ENCODE measurements at regions of chr20 and their contacts with region 1.

Region 1: DNA sequence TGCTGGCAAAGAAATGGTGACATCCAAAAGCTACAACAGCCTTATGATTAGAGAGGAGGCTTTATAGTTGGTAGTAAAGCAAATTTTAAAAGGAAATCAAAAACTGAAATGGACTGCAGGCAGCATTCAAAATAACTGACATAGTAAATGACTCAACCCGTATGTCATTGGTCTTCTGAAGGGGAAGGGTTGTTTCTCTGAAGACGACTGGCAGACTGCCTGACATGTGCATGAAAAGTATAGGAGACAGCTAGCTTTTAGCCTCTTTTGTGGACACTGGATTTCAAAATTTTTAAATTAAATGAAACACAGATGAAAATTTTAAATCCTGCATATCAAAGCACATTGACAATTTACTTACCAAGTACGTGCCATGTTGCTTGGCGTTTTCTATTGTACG is 90.7 kb downstream of the TRMT6 start:
- DNase-seq: no peak
- ATAC-seq: no peak
- H3K4me3 ChIP-seq: no peak overlapping the region
- H3K4me3 Mint-ChIP-seq: no peak overlapping the region
- H3K27ac ChIP-seq: no peak overlapping the region
- H3K27ac Mint-ChIP-seq: no peak overlapping the region
- H3K4me1 ChIP-seq: peaks cover 15% of the 10 kb centered on the region
- H3K4me1 Mint-ChIP-seq: peaks cover 11% of the 10 kb centered on the region
- H3K27me3 ChIP-seq: no peaks in the 10 kb centered on the region
- H3K27me3 Mint-ChIP-seq: no peaks in the 10 kb centered on the region
- CTCF ChIP-seq: no peak

Region 2: GRCh38 chr20:5877128-5877527 is 17.5 kb after region 1 on chr20:
- CTCF ChIA-PET with region 1: no interaction called
- POLR2A ChIA-PET with region 1: no interaction called
- intact Hi-C with region 1: no loop called
- DNase-seq: no peak
- ATAC-seq: no peak
- H3K4me3 ChIP-seq: no peak overlapping the region
- H3K4me3 Mint-ChIP-seq: no peak overlapping the region
- H3K27ac ChIP-seq: no peak overlapping the region
- H3K27ac Mint-ChIP-seq: no peak overlapping the region
- H3K4me1 ChIP-seq: no peaks in the 10 kb centered on the region
- H3K4me1 Mint-ChIP-seq: peaks cover 5% of the 10 kb centered on the region
- H3K27me3 ChIP-seq: no peaks in the 10 kb centered on the region
- H3K27me3 Mint-ChIP-seq: no peaks in the 10 kb centered on the region
- CTCF ChIP-seq: no peak

Region 3: GRCh38 chr20:5900908-5901307 is 41.3 kb after region 1 on chr20:
- CTCF ChIA-PET with region 1: no interaction called
- POLR2A ChIA-PET with region 1: no interaction called
- intact Hi-C with region 1: loop called in 1 of 2 experiments (anchors 5 kb)
- DNase-seq: no peak
- ATAC-seq: no peak
- H3K4me3 ChIP-seq: no peak overlapping the region
- H3K4me3 Mint-ChIP-seq: no peak overlapping the region
- H3K27ac ChIP-seq: no peak overlapping the region
- H3K27ac Mint-ChIP-seq: no peak overlapping the region
- H3K4me1 ChIP-seq: no peaks in the 10 kb centered on the region
- H3K4me1 Mint-ChIP-seq: no peaks in the 10 kb centered on the region
- H3K27me3 ChIP-seq: peaks cover 5 to 9% of the 10 kb centered on the region in 2 experiments
- H3K27me3 Mint-ChIP-seq: peaks cover 34% of the 10 kb centered on the region
- CTCF ChIP-seq: no peak

Region 4: DNA sequence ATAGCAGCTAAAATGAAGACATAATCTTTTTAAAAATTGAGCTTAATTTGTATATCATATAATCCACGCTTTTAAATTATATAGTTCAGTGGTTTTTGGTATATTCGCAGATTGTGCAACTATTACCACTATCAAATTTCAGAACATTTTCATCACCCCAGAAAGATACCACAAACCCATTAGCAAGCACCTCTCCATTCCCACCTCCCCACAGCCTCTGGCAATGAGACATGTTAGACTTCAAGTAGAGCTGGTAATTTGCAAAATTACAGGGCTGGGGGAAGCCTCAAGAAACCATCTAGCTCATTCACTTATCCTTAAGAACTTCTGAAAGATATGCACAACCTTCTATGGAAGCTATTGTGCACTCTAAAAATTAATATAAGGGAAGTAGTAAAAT is 53.6 kb after region 1 on chr20:
- CTCF ChIA-PET with region 1: no interaction called
- POLR2A ChIA-PET with region 1: no interaction called
- intact Hi-C with region 1: no loop called
- DNase-seq: no peak
- ATAC-seq: no peak
- H3K4me3 ChIP-seq: no peak overlapping the region
- H3K4me3 Mint-ChIP-seq: no peak overlapping the region
- H3K27ac ChIP-seq: no peak overlapping the region
- H3K27ac Mint-ChIP-seq: no peak overlapping the region
- H3K4me1 ChIP-seq: peaks cover 12% of the 10 kb centered on the region
- H3K4me1 Mint-ChIP-seq: peaks cover 12% of the 10 kb centered on the region
- H3K27me3 ChIP-seq: peaks cover 22 to 39% of the 10 kb centered on the region in 2 experiments
- H3K27me3 Mint-ChIP-seq: peaks cover 64% of the 10 kb centered on the region
- CTCF ChIP-seq: no peak

Measured in CD4-positive, alpha-beta T cell (primary cell).